ENCODE measurements at regions of chr17 and their contacts with region 1.

Region 1: DNA sequence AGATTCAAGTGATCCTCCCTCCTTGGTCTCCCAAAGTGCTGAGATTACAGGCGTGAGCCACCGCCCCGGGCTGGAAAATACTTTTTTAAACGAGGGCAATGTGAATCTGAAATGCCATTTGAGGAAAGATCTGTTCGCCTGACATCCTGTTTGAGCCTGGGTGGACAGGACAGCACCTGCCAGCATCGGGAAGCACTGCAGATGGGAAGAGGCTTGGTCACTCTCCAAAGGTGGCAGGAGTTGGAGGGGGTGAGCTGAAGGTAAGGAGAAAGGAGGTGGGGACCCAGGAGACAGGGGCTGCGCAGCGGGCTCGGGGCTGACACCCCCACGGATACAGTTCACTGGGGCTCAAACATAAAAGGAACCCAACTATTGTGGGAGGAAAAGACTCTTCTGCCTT is 3.9 kb upstream of the BIRC5 start:
- DNase-seq: no peak
- H3K27ac ChIP-seq: no peak overlapping the region
- CTCF ChIP-seq: no peak

Region 2: DNA sequence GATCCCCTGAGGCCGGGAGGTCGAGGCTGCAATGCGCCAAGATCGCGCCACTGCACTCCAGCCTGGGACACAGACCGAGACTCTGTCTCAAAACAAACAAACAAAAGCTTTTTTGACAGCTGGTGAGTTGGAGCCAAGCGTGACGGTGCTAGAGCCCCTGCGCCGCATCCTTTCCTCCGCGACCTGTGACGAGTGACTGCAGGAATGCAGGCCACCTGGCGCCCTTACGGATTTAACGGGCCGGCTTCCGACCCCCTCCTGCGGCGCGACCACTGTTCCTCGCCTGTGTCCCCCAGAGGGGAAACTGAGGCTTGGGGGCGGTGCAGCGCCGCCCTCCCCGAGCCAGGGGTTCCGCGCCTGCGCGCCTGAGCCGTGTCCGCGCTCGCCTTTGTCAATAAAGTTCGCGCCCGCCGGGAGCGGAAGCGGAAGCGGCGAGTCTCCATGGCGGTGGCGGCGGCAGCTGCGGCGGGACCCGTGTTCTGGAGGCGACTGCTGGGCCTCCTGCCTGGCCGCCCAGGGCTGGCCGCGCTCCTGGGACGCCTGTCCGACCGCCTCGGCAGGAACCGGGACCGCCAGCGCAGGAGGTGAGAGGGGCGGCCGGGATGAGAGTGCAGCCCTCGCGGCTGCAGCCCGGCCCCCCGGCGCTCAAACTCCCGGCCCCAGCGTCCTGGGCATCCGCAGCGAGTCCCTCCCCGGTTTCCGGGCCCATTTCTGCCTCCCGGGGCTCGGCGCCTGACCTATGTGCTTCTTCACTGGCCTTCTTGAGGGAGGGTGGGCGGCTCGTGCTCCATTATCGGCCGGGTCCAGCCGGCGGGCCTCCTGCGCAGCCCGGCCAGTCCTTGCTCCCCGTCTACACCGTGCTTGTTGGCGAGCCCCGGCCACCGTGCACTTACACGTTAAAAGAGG is 168.4 kb after region 1 on chr17 and contains the start of gene PGS1:
- CTCF ChIA-PET with region 1: no interaction called
- POLR2A ChIA-PET with region 1: interaction called, 11 read pairs
- DNase-seq: peak; percentile 68
- H3K27ac ChIP-seq: peak within 1 kb of the TSS; percentile 86
- CTCF ChIP-seq: no peak

Measured in RWPE1 (cell line).